PC-3 (cell line): ENCODE measurements at regions of chr3 and their contacts with region 1.

Region 1: DNA sequence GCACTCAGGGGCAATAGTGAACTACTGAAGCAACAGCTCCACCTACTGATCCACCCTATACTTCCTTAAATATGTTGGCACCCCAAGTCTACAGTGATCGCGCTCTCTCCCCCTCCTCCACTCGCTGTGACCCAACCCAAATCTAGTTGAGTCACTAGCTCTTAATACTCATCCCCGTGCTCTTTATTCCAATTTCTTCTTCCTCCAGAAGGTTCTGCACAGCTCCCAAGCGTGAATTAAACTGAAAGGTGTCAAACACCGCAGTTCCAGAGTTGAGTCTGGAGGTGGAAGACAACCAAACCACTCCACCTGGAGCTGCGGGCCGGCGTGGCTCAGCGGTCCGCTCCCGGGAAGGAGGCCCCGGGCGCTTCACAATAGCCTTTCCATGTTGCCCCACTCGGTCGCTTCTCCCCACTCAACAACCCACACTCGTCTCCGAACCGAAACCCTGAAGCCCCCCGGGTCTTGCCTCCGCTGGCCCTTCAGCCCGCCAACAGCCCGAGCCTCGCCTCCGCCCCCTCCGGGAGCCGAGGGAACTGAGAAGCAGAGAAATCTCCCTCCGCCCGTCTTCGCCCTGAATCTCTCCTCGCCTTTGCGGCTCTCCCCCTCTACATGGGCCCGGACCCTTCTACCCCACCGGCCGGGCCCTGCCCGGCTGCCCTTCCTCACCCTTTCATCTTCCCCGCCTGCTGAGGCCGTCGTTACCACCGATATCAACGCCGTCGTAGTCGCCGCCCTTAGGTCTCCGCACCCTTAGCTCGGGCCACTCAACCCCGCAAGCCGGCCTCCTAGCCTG is 578 bp downstream of the NAA50 start:
- DNase-seq: peak; percentile 93
- ATAC-seq: peak; percentile 64
- H3K4me3 ChIP-seq: peak overlapping the region; percentile 96
- H3K27ac ChIP-seq: peak overlapping the region; percentile 89
- H3K4me1 ChIP-seq: peaks cover 47% of the 10 kb centered on the region
- H3K27me3 ChIP-seq: no peaks in the 10 kb centered on the region
- CTCF ChIP-seq: peak; percentile 72

Region 2: DNA sequence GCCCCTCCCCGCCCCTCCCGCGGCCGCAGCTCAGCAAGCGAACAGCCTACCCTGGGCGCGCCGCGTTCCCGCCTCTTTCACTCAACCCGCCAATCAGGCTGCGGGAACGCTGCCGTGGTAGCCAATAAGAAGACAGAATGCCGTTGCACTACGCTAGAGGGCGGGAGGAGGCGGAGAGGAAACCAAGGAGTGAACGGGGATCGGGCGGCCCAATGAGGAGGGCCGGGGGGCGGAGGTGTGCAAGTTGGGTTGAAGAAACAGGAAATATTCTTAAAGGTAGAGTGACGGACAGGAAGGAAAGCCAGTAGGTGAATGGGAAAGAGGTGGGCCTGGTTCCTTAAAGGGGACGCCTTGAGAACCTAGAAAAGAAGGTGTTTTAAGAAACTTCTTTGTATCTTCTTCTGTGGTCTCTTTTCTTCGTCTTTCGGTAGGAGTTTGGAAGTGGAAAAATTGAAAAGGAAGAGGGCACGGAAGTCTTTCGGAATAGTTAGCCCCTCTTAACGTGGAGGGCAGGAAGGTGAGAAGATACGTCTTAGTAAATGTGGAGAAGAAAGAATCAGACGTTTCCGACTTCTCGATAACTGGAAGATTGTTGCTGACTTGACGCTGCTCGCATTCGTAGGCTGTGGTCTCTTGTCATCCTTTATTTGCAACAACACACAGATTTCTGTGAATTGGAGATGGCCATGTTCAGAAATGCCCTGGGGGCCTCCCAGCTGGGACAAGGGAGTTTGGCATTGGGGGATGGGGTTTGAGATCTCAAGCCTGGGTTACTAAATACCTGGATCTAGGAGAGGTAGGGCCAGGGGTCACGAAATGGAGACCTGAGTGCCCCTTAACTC is 48.6 kb before region 1 on chr3:
- CTCF ChIA-PET with region 1: interaction called, 4 read pairs
- POLR2A ChIA-PET with region 1: no interaction called
- intact Hi-C with region 1: loop called (anchors 1 kb)
- DNase-seq: peak; percentile 99
- ATAC-seq: peak; percentile 82
- H3K4me3 ChIP-seq: peak overlapping the region; percentile 73
- H3K27ac ChIP-seq: no peak overlapping the region
- H3K4me1 ChIP-seq: peaks cover 14% of the 10 kb centered on the region
- H3K27me3 ChIP-seq: no peaks in the 10 kb centered on the region
- CTCF ChIP-seq: no peak

Region 3: GRCh38 chr3:113838631-113839209 is 93.2 kb after region 1 on chr3 and contains the start of gene GRAMD1C:
- CTCF ChIA-PET with region 1: interaction called, 3 read pairs
- POLR2A ChIA-PET with region 1: interaction called, 31 read pairs
- intact Hi-C with region 1: no loop called
- DNase-seq: peak; percentile 91
- ATAC-seq: peak; percentile 94
- H3K4me3 ChIP-seq: peak within 1 kb of the TSS; percentile 80
- H3K27ac ChIP-seq: no peak within 1 kb of the TSS
- H3K4me1 ChIP-seq: peaks cover 17% of the 10 kb centered on the region
- H3K27me3 ChIP-seq: no peaks in the 10 kb centered on the region
- CTCF ChIP-seq: peak; percentile 90
- total RNA-seq, gene GRAMD1C: 2.8 and 4.5 TPM in 2 replicates

Region 4: DNA sequence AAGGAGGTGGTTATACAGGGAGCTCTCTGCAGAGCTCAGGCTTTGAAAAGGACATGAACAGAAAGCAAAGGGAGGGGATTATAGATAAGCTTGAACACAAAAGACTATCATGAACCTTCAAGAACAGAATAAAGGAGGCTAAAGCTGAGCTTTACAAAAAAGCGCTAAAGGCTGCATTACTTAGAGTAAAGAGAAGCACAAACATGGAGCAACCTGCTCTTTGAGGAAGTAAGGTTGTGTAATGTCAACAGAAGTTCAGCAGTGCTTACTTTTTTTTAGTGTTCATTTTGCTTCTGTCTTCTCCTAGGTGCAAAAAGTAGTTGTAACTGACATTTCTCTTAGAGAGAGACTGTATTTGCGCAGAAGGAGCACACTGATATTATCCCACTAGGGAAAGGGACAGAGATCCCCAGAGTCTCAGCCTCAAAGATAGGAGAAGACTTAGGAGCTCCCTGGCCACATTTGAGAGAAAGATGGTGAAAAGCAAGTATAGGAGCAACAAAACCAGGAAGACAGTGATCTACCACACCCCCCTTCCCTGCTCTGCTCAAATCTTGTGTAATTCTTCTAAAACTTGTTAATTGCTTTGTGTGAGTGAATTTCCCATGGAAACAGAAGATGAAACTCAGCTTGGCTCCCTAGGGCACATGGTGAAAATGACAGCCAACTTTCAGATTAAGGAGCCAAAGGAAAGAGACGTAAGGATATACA is 365.7 kb after region 1 on chr3:
- CTCF ChIA-PET with region 1: no interaction called
- POLR2A ChIA-PET with region 1: interaction called, 16 read pairs
- intact Hi-C with region 1: no loop called
- DNase-seq: no peak
- ATAC-seq: no peak
- H3K4me3 ChIP-seq: no peak overlapping the region
- H3K27ac ChIP-seq: no peak overlapping the region
- H3K4me1 ChIP-seq: no peaks in the 10 kb centered on the region
- H3K27me3 ChIP-seq: peaks cover 14% of the 10 kb centered on the region; the same call in 1 of the 2 replicates
- CTCF ChIP-seq: no peak